Aorta (tissue), 5 donors: ENCODE measurements at regions of chr11 and their contacts with region 1.

Region 1: DNA sequence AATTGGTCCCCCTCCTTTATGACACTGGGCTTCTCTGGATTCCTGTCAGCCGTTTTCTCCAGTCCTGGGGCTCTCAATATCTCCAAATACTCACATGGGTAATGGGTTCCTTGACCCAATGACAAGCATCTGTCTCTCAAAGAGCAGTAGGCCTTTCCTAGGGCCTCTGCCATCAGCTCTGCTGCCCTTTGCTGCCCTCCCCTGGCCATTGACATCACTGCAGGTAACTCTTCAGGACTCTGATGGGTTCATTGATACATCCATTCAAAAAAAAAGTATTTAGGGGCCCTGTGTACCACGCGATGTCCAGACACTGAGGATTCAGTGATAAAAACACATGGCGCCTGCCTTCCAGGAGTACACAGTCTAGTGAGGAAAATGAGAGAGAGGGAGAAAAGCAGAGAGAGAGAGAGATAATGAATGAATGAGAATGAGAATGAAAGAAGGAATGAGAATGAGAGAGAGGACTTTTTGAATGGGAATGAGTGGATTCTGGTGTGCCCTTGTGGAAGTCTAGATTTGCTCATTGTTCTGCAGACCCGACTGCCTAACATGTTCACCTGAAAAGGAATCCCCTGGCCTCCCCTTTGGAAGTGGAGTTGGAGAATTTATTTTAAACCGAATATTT is 42.6 kb upstream of the OLFML1 start:
- DNase-seq: peak; percentile 75 to 86
- ATAC-seq: peak; percentile 69
- H3K4me3 ChIP-seq: no peak overlapping the region
- H3K27ac ChIP-seq: no peak overlapping the region
- H3K4me1 ChIP-seq: no peaks in the 10 kb centered on the region
- H3K27me3 ChIP-seq: no peaks in the 10 kb centered on the region

Region 2: DNA sequence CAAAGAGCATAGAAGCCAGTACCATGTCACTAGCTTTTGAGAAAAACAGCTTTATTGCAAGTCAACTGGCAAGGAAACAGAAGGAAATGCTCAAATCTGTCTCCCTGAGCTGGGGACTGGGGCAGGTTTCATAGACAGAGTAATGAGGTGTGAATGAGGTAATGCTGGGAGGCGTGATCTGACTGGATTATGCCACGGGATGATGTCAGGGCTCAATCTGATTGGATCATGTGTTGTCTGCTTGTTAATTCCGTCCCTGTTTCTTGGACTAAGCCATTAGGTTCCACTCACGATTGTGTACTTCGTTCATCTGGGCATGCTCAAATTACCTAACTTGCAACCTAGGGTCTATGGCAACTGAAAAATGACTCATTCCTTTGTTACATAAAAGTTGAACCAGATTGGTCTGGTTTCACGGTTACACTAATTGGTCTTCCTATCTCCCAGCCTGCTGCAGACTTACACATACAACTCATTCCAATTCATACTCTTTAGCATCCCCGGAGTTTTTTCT is 617.4 kb before region 1 on chr11:
- intact Hi-C with region 1: loop called in 1 of 2 experiments (anchors 10 kb)
- DNase-seq: no peak
- ATAC-seq: no peak
- H3K4me3 ChIP-seq: no peak overlapping the region
- H3K27ac ChIP-seq: no peak overlapping the region
- H3K4me1 ChIP-seq: no peaks in the 10 kb centered on the region
- H3K27me3 ChIP-seq: no peaks in the 10 kb centered on the region

Region 3: DNA sequence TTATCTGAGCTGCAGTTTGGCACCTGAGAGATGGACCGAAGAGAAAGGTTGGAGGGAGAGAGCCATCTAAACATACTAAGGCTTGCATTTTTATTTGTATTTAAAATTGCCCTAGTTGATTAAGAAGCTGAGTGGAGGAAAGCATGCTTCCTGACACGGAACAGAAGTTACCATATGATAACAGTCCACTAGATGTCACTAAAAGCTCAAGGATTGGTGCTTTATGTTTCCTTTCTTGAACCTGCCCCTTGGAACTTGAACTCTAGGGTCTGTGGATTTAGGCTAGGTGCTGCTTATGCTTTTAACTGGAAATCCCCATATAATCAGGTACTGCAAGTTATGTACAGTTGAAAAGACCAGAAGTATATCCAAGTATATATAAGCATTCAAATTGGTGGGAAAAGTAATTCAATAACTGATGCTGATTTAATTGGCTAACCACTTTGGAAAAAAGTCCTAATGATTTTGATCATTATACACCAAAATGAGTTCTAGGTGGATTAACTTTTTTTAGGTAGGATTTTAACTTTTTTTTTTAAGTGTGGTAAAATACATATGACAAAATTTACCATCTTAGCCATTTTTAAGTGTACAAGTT is 344.4 kb before region 1 on chr11:
- intact Hi-C with region 1: loop called in 1 of 2 experiments (anchors 10 kb)
- DNase-seq: no peak
- ATAC-seq: no peak
- H3K4me3 ChIP-seq: no peak overlapping the region
- H3K27ac ChIP-seq: no peak overlapping the region
- H3K4me1 ChIP-seq: no peaks in the 10 kb centered on the region
- H3K27me3 ChIP-seq: no peaks in the 10 kb centered on the region

Region 4: GRCh38 chr11:7484645-7485044 is 41.9 kb after region 1 on chr11:
- intact Hi-C with region 1: loop called in 1 of 2 experiments (anchors 1 kb)
- DNase-seq: no peak
- ATAC-seq: no peak
- H3K4me3 ChIP-seq: no peak overlapping the region
- H3K27ac ChIP-seq: no peak overlapping the region
- H3K4me1 ChIP-seq: peaks cover 0 to 4% of the 10 kb centered on the region in 2 donors
- H3K27me3 ChIP-seq: no peaks in the 10 kb centered on the region

Region 5: GRCh38 chr11:7665473-7666291 is 223.0 kb after region 1 on chr11:
- intact Hi-C with region 1: no loop called
- DNase-seq: peak; percentile 85 to 93
- ATAC-seq: peak; percentile 89
- H3K4me3 ChIP-seq: no peak overlapping the region
- H3K27ac ChIP-seq: no peak overlapping the region
- H3K4me1 ChIP-seq: no peaks in the 10 kb centered on the region
- H3K27me3 ChIP-seq: no peaks in the 10 kb centered on the region